Esophagus muscularis mucosa (tissue), 4 donors: ENCODE measurements at regions of chr4 and their contacts with region 1.

Region 1: DNA sequence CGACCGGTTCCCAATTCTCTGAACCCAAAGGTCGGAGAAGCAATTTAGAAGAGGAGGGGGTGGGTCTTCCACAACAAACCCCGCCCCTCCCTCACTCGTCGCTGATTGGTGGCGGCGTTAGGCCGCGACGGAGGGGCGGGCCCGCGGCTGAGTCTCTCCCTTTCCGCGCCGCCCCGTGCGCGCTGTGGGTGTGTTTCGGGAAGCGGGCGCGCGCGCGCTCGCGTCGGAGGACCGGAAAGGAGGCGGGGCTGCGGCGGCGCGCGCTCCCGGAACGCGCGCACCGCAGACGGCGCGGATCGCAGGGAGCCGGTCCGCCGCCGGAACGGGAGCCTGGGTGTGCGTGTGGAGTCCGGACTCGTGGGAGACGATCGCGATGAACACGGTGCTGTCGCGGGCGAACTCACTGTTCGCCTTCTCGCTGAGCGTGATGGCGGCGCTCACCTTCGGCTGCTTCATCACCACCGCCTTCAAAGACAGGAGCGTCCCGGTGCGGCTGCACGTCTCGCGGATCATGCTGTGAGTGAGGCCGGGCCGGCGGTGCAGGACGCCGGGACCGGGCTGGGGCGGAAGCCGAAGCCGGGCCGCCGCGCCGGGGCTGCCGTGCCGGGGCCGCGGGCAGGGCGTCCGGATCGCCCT is at the start of gene SPCS3:
- DNase-seq: peak; percentile 98
- H3K4me3 ChIP-seq: peak within 1 kb of the TSS; percentile 85 to 98 (median 94)
- H3K27ac ChIP-seq: peak within 1 kb of the TSS; percentile 96 to 100 (median 98)
- H3K4me1 ChIP-seq: peaks cover 28 to 45% (median 43%) of the 10 kb centered on the region in 4 donors
- H3K27me3 ChIP-seq: no peaks in the 10 kb centered on the region
- CTCF ChIP-seq: no peak
- EP300 ChIP-seq: no peak
- POLR2A ChIP-seq: peak; percentile 96
- total RNA-seq, gene SPCS3: 35.5 to 48.4 (median 46.0) TPM

Region 2: GRCh38 chr4:175691791-175692190 is 628.0 kb before region 1 on chr4:
- intact Hi-C with region 1: no loop called
- DNase-seq: no peak
- H3K4me3 ChIP-seq: no peak overlapping the region
- H3K27ac ChIP-seq: no peak overlapping the region
- H3K4me1 ChIP-seq: no peaks in the 10 kb centered on the region
- H3K27me3 ChIP-seq: no peaks in the 10 kb centered on the region
- CTCF ChIP-seq: no peak
- EP300 ChIP-seq: no peak
- POLR2A ChIP-seq: no peak

Region 3: GRCh38 chr4:176195184-176195978 is 124.4 kb before region 1 on chr4 and contains the start of gene SPATA4:
- intact Hi-C with region 1: loop called (anchors 2 kb)
- DNase-seq: peak; percentile 96
- H3K4me3 ChIP-seq: peak within 1 kb of the TSS; percentile 61 to 87 (median 68)
- H3K27ac ChIP-seq: peak within 1 kb of the TSS; percentile 75 to 82 (median 80)
- H3K4me1 ChIP-seq: peaks cover 3 to 17% (median 10%) of the 10 kb centered on the region in 4 donors
- H3K27me3 ChIP-seq: no peaks in the 10 kb centered on the region
- CTCF ChIP-seq: no peak
- EP300 ChIP-seq: no peak
- POLR2A ChIP-seq: no peak
- total RNA-seq, gene SPATA4: 0.33 to 1.0 (median 0.83) TPM in 3 of 4 donors, not detected in the other

Region 4: DNA sequence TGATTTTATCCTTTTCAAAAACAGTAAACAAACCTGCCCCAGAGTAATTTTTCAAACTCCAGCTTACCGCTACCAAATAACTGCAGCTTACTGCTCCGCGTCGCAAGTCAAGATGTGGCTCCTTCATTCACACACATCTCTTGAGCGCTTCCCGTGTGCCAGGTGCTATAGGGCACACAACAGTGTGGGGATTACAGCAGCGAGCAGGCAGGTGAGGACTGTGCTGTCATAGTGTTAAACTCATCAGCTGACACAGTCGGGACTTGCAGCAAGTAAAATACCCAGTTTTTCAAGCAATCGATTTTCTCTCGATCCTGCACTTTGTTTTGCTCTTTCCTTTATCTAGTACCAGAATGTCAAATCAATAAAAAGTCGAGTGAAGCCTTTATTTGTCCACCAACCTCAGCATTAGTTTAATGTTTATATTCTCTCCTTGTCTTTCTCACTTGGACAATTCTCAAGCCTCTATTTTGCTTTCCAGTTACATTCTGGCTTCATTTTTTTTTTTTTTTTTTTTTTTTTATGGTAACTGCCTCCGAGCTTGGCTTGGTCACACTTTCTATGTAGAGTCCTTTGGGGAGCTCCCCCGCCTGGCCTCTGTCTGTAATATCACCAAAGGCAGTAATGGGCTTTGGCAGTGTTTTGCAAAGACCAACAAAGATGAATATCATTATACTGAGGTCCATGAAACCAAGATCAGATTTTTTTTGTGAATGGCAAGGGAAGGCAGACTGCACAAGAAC is 42.5 kb before region 1 on chr4:
- intact Hi-C with region 1: loop called (anchors 5 kb)
- DNase-seq: peak; percentile 89
- H3K4me3 ChIP-seq: peak overlapping the region; percentile 29 to 39 (median 34)
- H3K27ac ChIP-seq: peak overlapping the region; percentile 7 to 55 (median 48)
- H3K4me1 ChIP-seq: peaks cover 0 to 19% (median 13%) of the 10 kb centered on the region in 4 donors
- H3K27me3 ChIP-seq: no peaks in the 10 kb centered on the region
- CTCF ChIP-seq: peak; percentile 50 to 62 (median 60)
- EP300 ChIP-seq: no peak
- POLR2A ChIP-seq: no peak